Activated T-helper 1 cell treated with anti-CD3 and anti-CD28 coated beads, Interleukin-12 subunit alpha, Interleukin-12 subunit beta, Interleukin-2, Interleukin-4 antibody, amounts not matched to agents 30 ng/mL and 10 ng/mL and 1 ng/mL, durations not matched to agents 14 hours and 24 hours and 36 hours (primary cell): ENCODE measurements at regions of chr2 and their contacts with region 1.

Region 1: DNA sequence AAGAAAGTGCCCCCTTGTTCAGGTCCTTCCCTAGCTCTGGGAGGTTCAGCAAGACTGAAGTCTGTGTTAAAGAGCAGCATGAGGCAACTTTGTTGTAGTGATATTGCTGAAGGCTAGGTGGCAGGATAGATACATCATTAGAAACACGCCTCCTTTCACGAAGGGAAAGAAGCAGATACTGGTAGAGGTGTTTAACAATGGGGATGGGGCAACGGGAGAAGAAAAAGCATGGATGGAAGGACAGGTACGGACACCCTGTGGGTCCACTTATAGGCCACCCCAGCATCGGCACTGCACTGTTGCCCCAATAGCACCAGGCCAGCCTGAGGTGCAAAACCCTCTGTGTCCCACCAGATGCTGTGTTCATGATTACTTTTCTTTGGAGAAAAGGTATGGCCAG is 3.5 kb upstream of the IGFBP5 start:
- DNase-seq: no peak
- H3K4me3 Mint-ChIP-seq: no peak overlapping the region
- H3K27ac Mint-ChIP-seq: no peak overlapping the region
- H3K4me1 Mint-ChIP-seq: peaks cover 3% of the 10 kb centered on the region
- H3K27me3 Mint-ChIP-seq: peaks cover 36% of the 10 kb centered on the region

Region 2: GRCh38 chr2:216713691-216714336 is 14.9 kb after region 1 on chr2:
- intact Hi-C with region 1: no loop called
- DNase-seq: no peak
- H3K4me3 Mint-ChIP-seq: no peak overlapping the region
- H3K27ac Mint-ChIP-seq: no peak overlapping the region
- H3K4me1 Mint-ChIP-seq: no peaks in the 10 kb centered on the region
- H3K27me3 Mint-ChIP-seq: no peaks in the 10 kb centered on the region

Region 3: GRCh38 chr2:216777650-216778273 is 78.9 kb after region 1 on chr2:
- intact Hi-C with region 1: loop called (anchors 2 kb)
- DNase-seq: peak; percentile 36
- H3K4me3 Mint-ChIP-seq: no peak overlapping the region
- H3K27ac Mint-ChIP-seq: no peak overlapping the region
- H3K4me1 Mint-ChIP-seq: peaks cover 4% of the 10 kb centered on the region
- H3K27me3 Mint-ChIP-seq: peaks cover 13% of the 10 kb centered on the region

Region 4: GRCh38 chr2:216880509-216881184 is 181.8 kb after region 1 on chr2:
- intact Hi-C with region 1: loop called (anchors 10 kb)
- DNase-seq: peak; percentile 23
- H3K4me3 Mint-ChIP-seq: peak overlapping the region; percentile 63
- H3K27ac Mint-ChIP-seq: peak overlapping the region; percentile 86
- H3K4me1 Mint-ChIP-seq: peaks cover 32% of the 10 kb centered on the region
- H3K27me3 Mint-ChIP-seq: no peaks in the 10 kb centered on the region

Region 5: DNA sequence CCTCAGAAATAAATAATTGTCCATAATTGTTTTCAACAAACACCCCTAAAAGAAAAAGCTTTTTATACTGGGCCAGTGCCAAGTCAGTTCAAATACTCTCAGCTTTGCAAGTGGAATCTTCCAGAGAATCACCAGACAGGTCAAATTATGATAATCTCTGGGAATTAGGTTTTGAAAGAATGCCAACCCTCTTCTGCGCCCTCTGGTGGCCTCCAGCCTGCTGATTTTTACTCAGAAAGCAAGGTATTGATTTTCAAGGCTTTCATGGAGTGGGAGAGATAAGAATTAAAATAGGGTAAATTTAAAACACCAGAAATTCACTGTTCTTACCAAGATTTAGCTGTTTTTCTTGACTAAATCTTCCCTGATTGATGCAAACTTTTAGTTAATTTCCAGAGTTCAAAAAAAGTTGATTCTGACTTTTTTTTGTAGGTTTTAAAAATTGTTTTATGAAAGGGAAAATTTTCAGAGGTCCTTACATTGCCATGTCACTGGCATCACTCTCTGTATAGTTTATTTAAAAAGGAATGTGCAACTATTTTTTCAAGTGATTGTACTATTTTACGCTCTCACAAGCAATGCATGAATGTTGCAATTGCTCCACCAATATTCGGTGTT is 443.9 kb after region 1 on chr2:
- intact Hi-C with region 1: loop called (anchors 2 kb)
- DNase-seq: no peak
- H3K4me3 Mint-ChIP-seq: no peak overlapping the region
- H3K27ac Mint-ChIP-seq: no peak overlapping the region
- H3K4me1 Mint-ChIP-seq: no peaks in the 10 kb centered on the region
- H3K27me3 Mint-ChIP-seq: peaks cover 5% of the 10 kb centered on the region

Region 6: DNA sequence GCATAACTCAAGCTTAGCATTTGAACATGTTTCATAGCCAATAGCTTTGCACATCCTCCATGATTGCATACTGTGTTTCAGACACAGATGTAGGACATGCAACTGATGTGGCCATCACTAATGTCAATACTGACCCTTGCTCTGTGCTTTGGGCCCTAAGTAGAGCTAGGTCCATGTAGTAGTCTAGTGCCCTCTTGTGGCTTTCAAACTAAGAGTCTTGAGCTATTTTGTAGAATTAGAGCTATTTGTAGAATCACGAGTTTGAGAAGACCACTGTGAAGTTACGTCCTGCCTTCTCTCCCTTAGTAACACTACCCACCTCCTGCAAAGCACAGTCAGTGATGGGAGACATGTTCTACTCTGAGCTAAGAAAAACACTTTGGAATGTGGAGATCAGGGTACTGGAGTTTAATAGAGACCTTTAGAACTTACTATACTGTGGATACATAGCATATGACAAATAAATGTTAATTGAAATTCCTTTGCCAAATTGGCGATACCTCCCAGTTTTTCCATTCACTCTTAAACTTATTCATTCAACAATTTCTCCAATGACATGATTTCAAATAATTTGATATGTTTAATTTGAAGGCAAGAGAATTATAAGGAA is 467.5 kb after region 1 on chr2:
- intact Hi-C with region 1: loop called (anchors 1 kb)
- DNase-seq: no peak
- H3K4me3 Mint-ChIP-seq: no peak overlapping the region
- H3K27ac Mint-ChIP-seq: no peak overlapping the region
- H3K4me1 Mint-ChIP-seq: peaks cover 17% of the 10 kb centered on the region
- H3K27me3 Mint-ChIP-seq: peaks cover 2% of the 10 kb centered on the region

Region 7: DNA sequence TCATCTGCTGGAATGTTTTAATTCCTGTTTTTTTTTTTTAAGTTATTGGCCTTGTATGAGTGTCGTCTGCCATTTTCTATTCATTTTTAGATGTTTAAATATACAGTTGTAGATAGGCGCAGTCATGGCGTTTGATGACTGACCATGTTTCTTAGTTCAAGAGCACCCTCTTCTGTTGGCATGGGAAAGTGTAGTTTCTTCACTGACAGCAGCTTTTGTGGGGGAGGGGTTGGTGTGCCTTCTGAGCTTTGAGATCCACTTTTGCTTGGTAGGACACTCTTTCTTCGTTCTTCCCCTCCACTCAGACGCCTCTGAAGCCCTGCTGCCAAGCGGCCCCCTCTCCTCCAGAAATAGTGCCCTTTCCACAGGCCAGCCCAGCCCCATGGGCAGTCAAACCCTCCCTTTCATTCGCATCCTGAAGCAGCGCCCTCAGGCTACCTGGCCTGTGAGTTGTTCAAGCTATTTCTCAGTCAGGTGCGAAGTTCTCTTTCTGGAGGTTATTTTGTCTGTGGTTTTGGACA is 811.9 kb after region 1 on chr2:
- intact Hi-C with region 1: loop called (anchors 1 kb)
- DNase-seq: no peak
- H3K4me3 Mint-ChIP-seq: no peak overlapping the region
- H3K27ac Mint-ChIP-seq: no peak overlapping the region
- H3K4me1 Mint-ChIP-seq: peaks cover 7% of the 10 kb centered on the region
- H3K27me3 Mint-ChIP-seq: peaks cover 6% of the 10 kb centered on the region

Region 8: DNA sequence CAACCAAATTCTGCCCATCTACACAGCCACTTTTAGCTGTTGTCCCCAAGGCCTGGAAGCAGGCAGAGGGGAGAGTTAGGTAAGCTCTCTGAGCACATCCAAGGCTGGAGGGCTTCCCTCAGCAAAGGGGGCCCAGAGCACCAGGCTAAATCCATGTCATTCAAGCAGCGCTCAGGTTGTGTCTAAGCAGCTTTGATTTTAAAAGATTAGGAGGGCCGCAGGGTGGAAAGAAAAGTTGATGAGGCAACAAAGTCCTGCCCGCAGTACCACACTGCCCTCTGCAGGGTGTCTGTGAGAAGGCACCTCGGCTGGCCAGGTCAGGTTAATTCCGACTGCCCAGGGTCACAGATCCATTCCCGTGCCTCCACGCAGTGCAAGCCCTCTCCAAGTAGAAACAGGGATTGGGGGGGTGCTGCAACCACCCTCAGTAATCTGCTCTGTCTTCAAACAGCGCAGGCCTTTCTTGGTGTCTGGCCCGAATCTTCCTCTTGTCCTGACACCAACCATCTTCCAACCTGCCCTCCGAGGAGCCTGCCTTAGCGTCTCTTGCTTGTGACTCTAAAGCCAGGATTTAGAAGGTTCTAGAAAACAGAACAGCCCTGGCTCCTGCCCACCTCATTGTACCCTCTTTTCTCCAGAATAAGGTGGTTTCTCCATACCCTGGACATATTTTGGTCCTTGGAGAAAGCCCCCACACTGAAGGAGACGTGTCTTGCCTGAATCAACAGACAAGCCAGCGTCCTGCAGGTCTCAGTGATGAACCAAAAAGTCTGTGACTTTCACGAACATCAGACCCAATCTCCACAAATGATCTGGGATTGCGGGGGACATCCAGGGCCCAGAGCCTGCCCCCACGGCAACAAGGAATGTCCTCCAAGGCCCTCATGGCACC is 1014.7 kb after region 1 on chr2:
- intact Hi-C with region 1: loop called (anchors 1 kb)
- DNase-seq: peak; percentile 48
- H3K4me3 Mint-ChIP-seq: no peak overlapping the region
- H3K27ac Mint-ChIP-seq: no peak overlapping the region
- H3K4me1 Mint-ChIP-seq: no peaks in the 10 kb centered on the region
- H3K27me3 Mint-ChIP-seq: no peaks in the 10 kb centered on the region